Sigmoid colon (tissue), 7 donors: ENCODE measurements at regions of chr22 and their contacts with region 1.

Region 1: GRCh38 chr22:45435544-45436139 is 22.1 kb downstream of the RIBC2 start:
- DNase-seq: peak; percentile 95
- H3K4me3 ChIP-seq: peak overlapping the region in 1 of 4 donors; percentile 22
- H3K27ac ChIP-seq: peak overlapping the region; percentile 62 to 76 (median 66)
- H3K4me1 ChIP-seq: peaks cover 0 to 7% (median 5%) of the 10 kb centered on the region in 4 donors
- H3K27me3 ChIP-seq: no peaks in the 10 kb centered on the region
- CTCF ChIP-seq: peak; percentile 92 to 99 (median 97)
- EP300 ChIP-seq: no peak
- POLR2A ChIP-seq: no peak

Region 2: DNA sequence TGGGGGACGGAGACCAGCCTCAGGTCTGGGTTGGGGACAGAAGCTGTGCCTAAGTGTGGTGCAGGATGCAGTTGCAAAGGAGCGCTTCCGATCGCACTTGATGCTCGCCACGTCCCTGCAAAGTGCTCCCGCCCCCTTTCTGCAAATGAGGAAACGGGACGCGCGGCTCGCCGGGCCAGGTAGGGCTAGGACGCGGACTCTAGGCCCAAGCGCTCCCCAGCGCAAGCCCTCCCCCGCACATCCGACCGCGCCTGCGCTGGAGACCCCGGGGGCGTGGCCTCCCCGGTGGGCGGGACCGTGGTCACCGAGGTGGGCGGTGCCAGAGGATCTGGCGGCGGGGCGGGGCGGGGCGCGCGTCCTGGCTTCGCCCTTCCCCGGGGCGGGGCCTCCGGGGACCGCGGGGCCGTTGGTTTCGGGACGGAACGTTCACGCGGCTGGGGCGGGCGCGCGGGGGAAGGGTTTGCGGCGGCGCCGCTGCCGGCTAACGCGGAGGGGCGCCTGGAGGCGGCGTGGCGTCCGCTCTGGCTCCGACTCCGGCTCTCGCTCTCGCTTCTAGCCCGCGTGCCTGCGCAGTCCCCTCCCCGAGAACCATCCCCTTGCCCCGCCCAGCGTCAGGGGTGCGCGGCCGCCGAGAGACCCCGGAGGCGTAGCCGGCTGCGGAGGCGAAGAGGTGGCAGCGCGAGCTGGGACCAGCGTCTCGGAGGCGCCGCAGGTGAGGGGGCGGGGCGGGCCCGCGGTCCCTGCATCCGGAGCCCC is 126.0 kb before region 1 on chr22 and contains the start of gene FAM118A:
- intact Hi-C with region 1: loop called (anchors 5 kb)
- DNase-seq: peak; percentile 96
- H3K4me3 ChIP-seq: peak within 1 kb of the TSS; percentile 84 to 97 (median 95)
- H3K27ac ChIP-seq: peak within 1 kb of the TSS; percentile 83 to 90 (median 86)
- H3K4me1 ChIP-seq: peaks cover 0 to 20% (median 20%) of the 10 kb centered on the region in 4 donors
- H3K27me3 ChIP-seq: no peaks in the 10 kb centered on the region
- CTCF ChIP-seq: no peak
- EP300 ChIP-seq: no peak
- POLR2A ChIP-seq: peak; percentile 50 to 54
- total RNA-seq, gene FAM118A: 12.8 to 126 (median 38.8) TPM